WTC11 (cell line): ENCODE measurements at regions of chr17 and their contacts with region 1.

Region 1: DNA sequence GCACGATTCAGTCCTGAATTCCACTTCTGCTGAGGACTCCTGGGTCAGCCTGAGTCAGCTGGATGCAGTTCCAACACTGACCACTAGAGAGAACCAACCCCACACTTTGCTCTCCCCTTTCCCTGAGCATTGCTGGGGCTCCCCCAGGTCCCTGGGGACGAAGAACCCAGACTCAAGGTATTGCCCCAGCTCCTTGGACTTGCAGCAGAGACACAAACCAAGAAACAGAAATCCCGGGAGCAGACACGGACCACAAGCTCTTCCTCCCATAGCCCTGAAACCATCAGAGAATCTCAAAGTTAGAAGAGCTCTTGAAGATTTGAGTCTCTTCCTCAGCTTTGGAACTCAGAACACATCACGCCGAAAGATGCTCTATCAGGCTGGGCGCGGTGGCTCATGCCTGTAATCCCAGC is 678 bp upstream of the GH1 start:
- DNase-seq: peak; percentile 81
- ATAC-seq: peak; percentile 95
- H3K4me3 Mint-ChIP-seq: peak overlapping the region; percentile 46; the same call in 1 of the 2 replicates
- H3K27ac Mint-ChIP-seq: no peak overlapping the region
- H3K4me1 Mint-ChIP-seq: peaks cover 16% of the 10 kb centered on the region
- H3K27me3 Mint-ChIP-seq: peaks cover 3% of the 10 kb centered on the region; the same call in 1 of the 2 replicates
- CTCF ChIP-seq: peak; percentile 97

Region 2: DNA sequence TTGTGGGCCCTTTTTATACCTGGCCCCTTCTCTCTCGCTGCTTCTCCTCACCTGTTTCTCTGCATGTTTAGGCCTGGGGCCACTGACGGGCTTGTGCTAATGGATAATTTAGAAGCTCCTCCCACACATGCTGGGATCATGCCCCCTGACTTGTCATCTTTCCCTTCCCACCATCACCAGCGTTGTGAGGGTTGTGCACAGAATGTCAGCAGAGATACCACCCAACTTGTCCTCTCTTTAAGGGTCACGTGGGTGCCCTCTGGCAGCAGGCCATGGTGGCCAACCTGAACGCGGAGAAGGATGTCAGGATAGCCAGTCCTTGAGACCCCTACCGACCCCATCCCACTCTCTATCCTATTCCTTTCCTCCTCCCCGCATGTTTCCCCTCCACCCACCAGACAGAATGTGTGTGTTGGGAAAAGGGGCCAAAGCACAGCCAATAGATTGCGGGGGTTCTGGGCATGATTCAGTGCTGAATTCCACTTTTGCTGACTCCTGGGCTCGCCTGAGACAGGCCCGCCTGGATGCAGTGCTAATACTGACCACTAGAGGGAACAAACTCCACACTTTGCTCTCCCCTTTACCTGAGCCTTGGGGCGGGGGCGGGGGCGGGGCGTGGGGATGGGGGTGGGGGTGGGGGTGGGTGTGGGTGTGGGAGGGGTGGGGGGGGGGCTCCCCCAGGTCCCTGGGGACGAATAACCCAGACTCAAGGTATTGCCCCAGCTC is 37.3 kb before region 1 on chr17 and contains the start of gene GH2:
- CTCF ChIA-PET with region 1: interaction called, 33 read pairs
- POLR2A ChIA-PET with region 1: no interaction called
- DNase-seq: peak; percentile 86
- ATAC-seq: peak; percentile 83
- H3K4me3 Mint-ChIP-seq: peak within 1 kb of the TSS; percentile 23; the same call in 1 of the 2 replicates
- H3K27ac Mint-ChIP-seq: peak within 1 kb of the TSS; percentile 79
- H3K4me1 Mint-ChIP-seq: peaks cover 20% of the 10 kb centered on the region
- H3K27me3 Mint-ChIP-seq: peaks cover 4% of the 10 kb centered on the region; the same call in 1 of the 2 replicates
- CTCF ChIP-seq: peak; percentile 81
- total RNA-seq, gene GH2: 0.35 to 1.3 TPM (median 0.60 TPM) in 3 replicates

Region 3: GRCh38 chr17:63937334-63937733 is 18.0 kb after region 1 on chr17:
- CTCF ChIA-PET with region 1: interaction called, 87 read pairs
- POLR2A ChIA-PET with region 1: no interaction called
- DNase-seq: no peak
- ATAC-seq: no peak
- H3K4me3 Mint-ChIP-seq: no peak overlapping the region
- H3K27ac Mint-ChIP-seq: no peak overlapping the region
- H3K4me1 Mint-ChIP-seq: peaks cover 8% of the 10 kb centered on the region
- H3K27me3 Mint-ChIP-seq: no peaks in the 10 kb centered on the region; the same call in 1 of the 2 replicates
- CTCF ChIP-seq: no peak

Region 4: DNA sequence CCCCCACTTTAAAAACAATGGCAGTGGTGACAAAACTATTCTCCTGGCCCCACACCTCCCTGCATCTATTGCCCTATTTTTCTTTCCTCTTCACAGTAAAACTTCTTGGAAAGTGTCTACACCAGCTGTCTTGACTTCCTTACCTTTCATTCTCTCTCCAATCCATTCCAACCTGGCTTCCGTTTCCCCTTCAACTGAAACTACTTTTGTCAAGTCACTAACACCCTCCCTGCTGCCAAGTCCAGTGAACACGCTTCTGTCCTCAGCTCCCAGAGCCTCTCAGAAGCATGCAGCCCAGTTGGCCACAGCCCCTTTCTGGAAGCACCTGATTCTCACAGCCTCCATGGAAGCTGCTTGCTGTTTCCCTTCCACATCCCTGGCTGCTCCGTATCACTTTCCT is 57.4 kb after region 1 on chr17:
- CTCF ChIA-PET with region 1: interaction called, 20 read pairs
- POLR2A ChIA-PET with region 1: no interaction called
- DNase-seq: no peak
- ATAC-seq: no peak
- H3K4me3 Mint-ChIP-seq: no peak overlapping the region
- H3K27ac Mint-ChIP-seq: no peak overlapping the region
- H3K4me1 Mint-ChIP-seq: 0 out of 2 replicates have a peak, but pooled peaks cover 5% of the 10 kb centered on the region
- H3K27me3 Mint-ChIP-seq: peaks cover under 1% of the 10 kb centered on the region
- CTCF ChIP-seq: no peak

Region 5: DNA sequence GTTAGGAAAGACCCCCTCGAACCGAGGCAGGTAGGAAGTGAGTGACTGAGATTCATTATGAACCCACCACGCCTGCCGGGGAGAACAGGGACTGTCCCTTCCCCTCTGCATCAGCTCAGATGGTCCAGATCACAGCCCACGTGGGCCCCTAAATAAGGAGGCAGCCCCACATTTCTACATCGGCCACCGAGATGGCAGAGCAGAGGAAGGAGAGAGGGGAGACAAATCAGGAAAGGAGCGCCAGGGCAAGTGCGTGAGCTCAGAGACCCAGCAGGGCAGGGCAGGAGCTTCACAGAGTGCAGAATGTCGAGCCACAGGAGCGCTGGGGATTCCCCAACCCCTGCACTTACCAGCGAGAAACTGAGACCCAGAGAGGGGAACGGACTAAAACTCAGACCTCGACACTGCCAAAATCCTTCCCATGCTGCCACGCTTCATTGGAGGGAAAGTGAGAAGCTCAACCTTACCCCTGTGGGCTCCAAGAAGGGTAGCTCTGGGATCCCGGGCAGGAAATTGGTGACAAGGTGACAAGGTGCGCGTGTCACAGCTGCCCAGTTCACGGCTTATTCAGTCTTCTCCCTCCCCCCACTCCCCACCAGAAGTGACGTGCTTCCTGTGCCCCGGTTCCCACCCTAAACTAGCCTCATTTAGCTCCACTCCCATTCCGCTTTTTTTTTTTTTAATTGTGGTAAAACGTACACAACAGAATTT is 100.9 kb after region 1 on chr17 and contains the start of gene ICAM2:
- CTCF ChIA-PET with region 1: interaction called, 74 read pairs
- POLR2A ChIA-PET with region 1: no interaction called
- DNase-seq: no peak
- ATAC-seq: peak; percentile 63
- H3K4me3 Mint-ChIP-seq: peak within 1 kb of the TSS; percentile 41
- H3K27ac Mint-ChIP-seq: no peak within 1 kb of the TSS; the same call in 1 of the 2 replicates
- H3K4me1 Mint-ChIP-seq: peaks cover 10% of the 10 kb centered on the region
- H3K27me3 Mint-ChIP-seq: peaks cover 2% of the 10 kb centered on the region; the same call in 1 of the 2 replicates
- CTCF ChIP-seq: no peak
- total RNA-seq, gene ICAM2: 0.33 to 0.57 TPM (median 0.44 TPM) in 3 replicates